CD14-positive monocyte (primary cell): ENCODE measurements at regions of chr14 and their contacts with region 1.

Region 1: DNA sequence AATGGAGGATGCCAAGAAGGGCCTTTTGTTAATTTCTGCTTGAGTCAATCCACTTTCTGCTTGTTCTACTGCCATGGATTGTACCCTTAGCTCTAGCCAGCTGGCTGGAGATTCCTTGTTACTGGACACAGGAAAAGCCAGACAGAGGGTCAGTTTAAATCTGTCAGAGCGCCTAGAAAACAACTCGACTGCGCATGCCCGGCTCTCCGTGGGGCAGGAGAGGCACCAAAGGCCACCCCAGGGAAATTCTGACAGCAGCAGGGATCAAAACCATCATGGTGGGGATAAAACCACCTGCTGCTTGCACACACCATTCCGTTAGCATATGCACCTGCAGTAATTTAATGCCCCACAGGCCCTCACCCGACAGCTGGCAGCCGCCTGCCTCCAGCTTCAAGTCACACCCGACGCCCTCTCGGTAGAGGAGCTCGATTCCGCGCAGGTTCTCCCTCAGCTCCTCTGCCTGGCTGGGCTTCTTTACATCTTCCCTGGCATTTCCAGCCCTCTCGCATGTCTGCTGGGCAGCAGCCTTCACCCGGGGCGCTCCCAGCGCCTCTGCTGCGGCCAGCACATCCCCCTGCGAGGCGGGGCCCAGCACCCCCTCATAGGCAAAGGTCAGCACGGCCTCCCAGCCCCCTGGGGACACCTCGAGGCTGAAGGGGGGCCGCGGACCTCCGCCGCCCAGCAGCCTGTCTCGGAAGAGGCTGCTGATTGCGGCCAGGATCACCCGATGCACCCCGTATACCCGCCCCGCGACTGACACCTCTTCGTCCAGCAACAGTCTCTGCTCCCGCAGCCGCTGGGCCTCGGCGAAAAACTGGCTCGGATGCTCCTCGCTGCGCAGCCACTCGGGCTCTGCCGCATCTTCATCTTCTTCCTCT is 1.0 kb downstream of the KLHL33 start:
- DNase-seq: no peak
- H3K4me3 ChIP-seq: no peak overlapping the region
- H3K4me3 Mint-ChIP-seq: no peak overlapping the region
- H3K27ac ChIP-seq: no peak overlapping the region
- H3K27ac Mint-ChIP-seq: peak overlapping the region in 1 of 7 donors; percentile 75
- H3K4me1 ChIP-seq: peaks cover 27 to 31% of the 10 kb centered on the region in 2 donors
- H3K4me1 Mint-ChIP-seq: peaks cover 39% of the 10 kb centered on the region
- H3K27me3 ChIP-seq: no peaks in the 10 kb centered on the region
- H3K27me3 Mint-ChIP-seq: peaks cover 0 to 5% (median 0%) of the 10 kb centered on the region in 3 donors
- CTCF ChIP-seq: no peak

Region 2: DNA sequence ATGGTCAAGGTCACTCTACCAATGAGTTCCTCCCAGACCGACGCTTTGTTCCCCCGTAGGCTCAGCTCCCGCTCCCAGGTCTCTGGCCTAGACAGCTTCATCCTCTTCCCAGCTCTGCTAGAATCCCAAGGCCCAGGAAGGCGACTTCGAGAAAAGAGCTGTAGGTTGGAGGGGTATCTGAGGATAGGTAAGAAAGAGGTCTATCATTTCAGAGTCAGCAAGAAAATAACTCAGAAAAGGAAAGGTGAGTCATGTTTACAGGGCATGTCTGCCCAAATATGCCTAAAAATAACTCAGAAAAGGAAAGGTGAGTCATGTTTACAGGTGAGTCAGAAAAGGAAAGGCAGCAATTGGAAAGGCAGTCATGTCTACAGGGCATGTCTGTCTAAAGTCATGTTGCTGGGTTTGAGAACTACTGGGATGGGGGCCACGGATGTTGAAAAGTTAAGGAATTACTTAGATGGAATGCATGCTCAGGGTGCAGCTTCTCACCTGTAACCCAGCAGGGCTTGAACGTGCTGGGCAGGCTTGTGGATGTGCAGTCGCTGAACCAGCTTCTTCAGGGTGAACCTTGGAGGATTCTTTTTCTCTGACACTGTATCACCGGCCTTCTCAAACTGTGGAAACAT is 33.9 kb before region 1 on chr14:
- intact Hi-C with region 1: no loop called
- DNase-seq: no peak
- H3K4me3 ChIP-seq: no peak overlapping the region
- H3K4me3 Mint-ChIP-seq: no peak overlapping the region
- H3K27ac ChIP-seq: no peak overlapping the region
- H3K27ac Mint-ChIP-seq: peak overlapping the region in 3 of 7 donors; percentile 56 to 77 (median 68)
- H3K4me1 ChIP-seq: no peaks in the 10 kb centered on the region
- H3K4me1 Mint-ChIP-seq: peaks cover 5% of the 10 kb centered on the region
- H3K27me3 ChIP-seq: no peaks in the 10 kb centered on the region
- H3K27me3 Mint-ChIP-seq: no peaks in the 10 kb centered on the region
- CTCF ChIP-seq: no peak

Region 3: GRCh38 chr14:20489093-20489994 is 54.4 kb after region 1 on chr14:
- intact Hi-C with region 1: loop called in 1 of 2 experiments (anchors 5 kb)
- DNase-seq: no peak
- H3K4me3 ChIP-seq: peak overlapping the region in 1 of 3 experiments; percentile 14
- H3K4me3 Mint-ChIP-seq: peak overlapping the region in 1 of 2 donors; percentile 43
- H3K27ac ChIP-seq: peak overlapping the region in 1 of 2 donors; percentile 22
- H3K27ac Mint-ChIP-seq: peak overlapping the region in 6 of 7 donors; percentile 2 to 85 (median 47)
- H3K4me1 ChIP-seq: peaks cover 50 to 66% of the 10 kb centered on the region in 2 donors
- H3K4me1 Mint-ChIP-seq: peaks cover 64% of the 10 kb centered on the region
- H3K27me3 ChIP-seq: no peaks in the 10 kb centered on the region
- H3K27me3 Mint-ChIP-seq: no peaks in the 10 kb centered on the region
- CTCF ChIP-seq: no peak